Activated CD8-positive, alpha-beta memory T cell treated with anti-CD3 and anti-CD28 coated beads, Interleukin-2, amount 10 ng/mL, durations not matched to agents 7 days and 5 days (primary cell): ENCODE measurements at regions of chr17 and their contacts with region 1.

Region 1: GRCh38 chr17:42548070-42548837 is 4.5 kb upstream of the HSD17B1 start:
- DNase-seq: peak; percentile 87
- ATAC-seq: peak; percentile 89
- H3K4me3 Mint-ChIP-seq: peak overlapping the region; percentile 43
- H3K27ac Mint-ChIP-seq: no peak overlapping the region
- H3K4me1 Mint-ChIP-seq: peaks cover 14% of the 10 kb centered on the region
- H3K27me3 Mint-ChIP-seq: no peaks in the 10 kb centered on the region

Region 2: GRCh38 chr17:42536048-42536371 is 12.2 kb before region 1 on chr17 and contains the start of gene NAGLU:
- CTCF ChIA-PET with region 1: interaction called, 14 read pairs
- DNase-seq: peak; percentile 93
- ATAC-seq: peak; percentile 95
- H3K4me3 Mint-ChIP-seq: peak within 1 kb of the TSS; percentile 84
- H3K27ac Mint-ChIP-seq: peak within 1 kb of the TSS; percentile 84
- H3K4me1 Mint-ChIP-seq: peaks cover 47% of the 10 kb centered on the region
- H3K27me3 Mint-ChIP-seq: peaks cover 15% of the 10 kb centered on the region
- total RNA-seq, gene NAGLU: 18.2 to 19.4 TPM

Region 3: DNA sequence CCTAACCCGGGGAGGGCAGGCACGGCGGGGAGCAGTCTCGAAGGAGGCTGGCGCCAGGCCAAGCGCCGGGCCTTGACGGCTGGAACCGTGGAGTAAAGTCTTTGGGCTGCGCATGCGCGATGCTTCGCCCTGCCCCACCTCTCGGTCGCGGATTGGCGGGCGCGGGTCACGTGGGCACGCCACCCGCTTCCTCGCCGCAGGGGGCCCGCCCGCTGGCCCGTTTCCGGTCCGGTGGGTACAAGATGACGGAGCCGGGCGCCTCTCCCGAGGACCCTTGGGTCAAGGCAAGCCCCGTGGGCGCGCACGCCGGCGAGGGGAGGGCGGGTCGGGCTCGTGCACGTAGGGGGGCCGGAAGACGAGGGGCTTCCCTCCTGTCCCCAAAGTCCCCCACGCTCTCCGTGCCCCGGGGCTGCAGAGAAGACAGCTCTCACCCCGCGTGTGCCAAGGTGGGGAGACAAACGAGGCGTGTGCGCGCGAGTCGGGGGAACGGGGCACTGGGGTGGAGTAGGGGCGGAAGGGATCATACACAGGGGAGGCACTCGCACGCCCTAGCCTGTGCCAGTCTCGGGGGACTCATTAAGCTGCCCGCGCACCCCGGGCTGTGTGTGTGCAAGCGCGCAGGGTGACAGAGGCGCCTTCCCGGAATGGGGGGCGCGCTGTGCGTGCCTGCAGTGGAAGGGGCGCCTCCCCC is 18.8 kb after region 1 on chr17 and contains the start of gene MLX:
- CTCF ChIA-PET with region 1: interaction called, 13 read pairs
- DNase-seq: peak; percentile 94
- ATAC-seq: peak; percentile 78
- H3K4me3 Mint-ChIP-seq: peak within 1 kb of the TSS; percentile 94
- H3K27ac Mint-ChIP-seq: peak within 1 kb of the TSS; percentile 94
- H3K4me1 Mint-ChIP-seq: peaks cover 62% of the 10 kb centered on the region
- H3K27me3 Mint-ChIP-seq: no peaks in the 10 kb centered on the region
- total RNA-seq, gene MLX: 54.8 to 60.4 TPM